WTC11 (cell line): ENCODE measurements at regions of chr2 and their contacts with region 1.

Region 1: GRCh38 chr2:25131567-25132298 is 36.6 kb downstream of the POMC start:
- DNase-seq: peak; percentile 47
- ATAC-seq: peak; percentile 56
- H3K4me3 Mint-ChIP-seq: peak overlapping the region; percentile 69
- H3K27ac Mint-ChIP-seq: no peak overlapping the region
- H3K4me1 Mint-ChIP-seq: peaks cover 13% of the 10 kb centered on the region
- H3K27me3 Mint-ChIP-seq: peaks cover 26% of the 10 kb centered on the region
- CTCF ChIP-seq: no peak

Region 2: GRCh38 chr2:24827321-24828237 is 304.2 kb before region 1 on chr2:
- CTCF ChIA-PET with region 1: interaction called, 10 read pairs
- POLR2A ChIA-PET with region 1: no interaction called
- DNase-seq: peak; percentile 89
- ATAC-seq: peak; percentile 89
- H3K4me3 Mint-ChIP-seq: no peak overlapping the region
- H3K27ac Mint-ChIP-seq: peak overlapping the region; percentile 90
- H3K4me1 Mint-ChIP-seq: peaks cover 33% of the 10 kb centered on the region
- H3K27me3 Mint-ChIP-seq: no peaks in the 10 kb centered on the region; the same call in 1 of the 2 replicates
- CTCF ChIP-seq: peak; percentile 77

Region 3: DNA sequence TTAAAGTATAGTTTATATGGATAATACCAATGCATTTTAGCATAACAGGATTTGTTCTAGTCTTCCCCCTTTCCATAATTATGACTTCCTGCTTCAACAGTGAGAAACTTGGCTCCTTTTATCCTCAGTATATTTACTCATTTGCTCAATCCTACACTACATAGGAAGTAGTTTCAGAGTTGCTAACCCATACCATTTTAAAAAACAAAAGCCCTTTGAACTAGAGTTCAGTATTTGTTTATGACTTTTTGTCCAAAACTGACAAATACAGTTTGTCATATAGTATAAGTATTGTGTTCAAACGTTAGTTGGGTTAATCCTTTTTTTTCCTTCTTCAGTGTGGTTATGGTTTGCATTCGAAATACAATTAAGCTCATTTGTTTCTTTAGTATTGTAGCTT is 154.1 kb before region 1 on chr2:
- CTCF ChIA-PET with region 1: interaction called, 140 read pairs
- POLR2A ChIA-PET with region 1: interaction called, 4 read pairs
- DNase-seq: no peak
- ATAC-seq: no peak
- H3K4me3 Mint-ChIP-seq: no peak overlapping the region
- H3K27ac Mint-ChIP-seq: no peak overlapping the region
- H3K4me1 Mint-ChIP-seq: peaks cover 2% of the 10 kb centered on the region; the same call in 1 of the 2 replicates
- H3K27me3 Mint-ChIP-seq: no peaks in the 10 kb centered on the region
- CTCF ChIP-seq: no peak

Region 4: DNA sequence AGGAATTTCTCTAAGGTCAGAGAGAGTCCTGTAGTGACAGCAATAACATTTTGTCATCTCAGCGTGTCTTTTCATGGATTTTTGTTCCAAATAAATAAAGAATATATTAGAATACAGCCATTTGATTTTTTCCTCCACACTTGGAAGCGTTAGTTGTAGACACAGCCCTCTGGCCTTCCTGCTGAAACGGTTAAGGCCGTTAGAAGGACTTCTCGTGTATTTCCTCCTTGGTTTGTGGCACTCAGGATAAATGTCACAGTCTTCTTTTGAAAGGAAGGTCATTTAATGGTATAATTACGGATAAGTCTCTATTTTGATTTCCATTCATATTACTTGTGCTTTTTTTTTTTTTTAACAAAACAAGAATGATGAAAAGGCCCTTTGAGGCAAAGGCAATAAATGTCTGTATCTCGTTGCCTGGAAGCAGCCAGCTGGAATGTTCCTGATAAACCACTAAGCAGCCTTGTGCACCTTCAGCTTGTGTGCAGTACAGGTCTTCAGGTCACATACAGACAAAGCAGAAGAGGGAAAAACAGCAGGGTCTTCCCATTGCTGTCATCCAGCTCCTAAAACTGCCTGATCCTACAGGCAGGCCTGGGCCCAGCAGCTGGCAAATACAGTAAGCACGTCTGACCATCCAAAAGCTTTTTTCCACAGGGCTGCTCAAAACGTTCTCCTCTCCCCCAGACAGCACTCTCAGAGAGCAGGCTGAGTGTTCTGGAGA is 75.5 kb before region 1 on chr2:
- CTCF ChIA-PET with region 1: interaction called, 12 read pairs
- POLR2A ChIA-PET with region 1: no interaction called
- DNase-seq: no peak
- ATAC-seq: no peak
- H3K4me3 Mint-ChIP-seq: no peak overlapping the region
- H3K27ac Mint-ChIP-seq: no peak overlapping the region
- H3K4me1 Mint-ChIP-seq: peaks cover 3% of the 10 kb centered on the region; the same call in 1 of the 2 replicates
- H3K27me3 Mint-ChIP-seq: no peaks in the 10 kb centered on the region
- CTCF ChIP-seq: no peak

Region 5: DNA sequence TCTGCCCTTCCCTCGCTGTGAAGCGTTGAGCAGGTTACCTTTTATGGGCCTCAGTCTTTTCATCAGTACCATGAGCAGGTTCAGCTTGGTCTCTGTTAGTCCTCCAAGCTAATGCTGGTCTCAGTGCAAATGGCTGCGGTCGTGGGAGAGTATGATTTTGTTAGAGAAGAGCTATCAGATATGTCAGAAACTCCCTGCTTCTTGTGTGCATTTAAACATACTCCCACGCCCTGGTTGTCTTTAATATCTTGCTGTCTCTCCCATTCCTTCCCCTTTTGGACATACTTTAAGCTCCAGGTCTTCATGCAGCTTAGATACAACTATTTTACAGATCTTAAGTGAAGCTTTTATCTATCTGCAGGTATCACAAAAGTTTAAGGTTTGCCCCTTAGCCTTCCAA is 27.0 kb before region 1 on chr2:
- CTCF ChIA-PET with region 1: interaction called, 10 read pairs
- POLR2A ChIA-PET with region 1: no interaction called
- DNase-seq: no peak
- ATAC-seq: no peak
- H3K4me3 Mint-ChIP-seq: no peak overlapping the region
- H3K27ac Mint-ChIP-seq: no peak overlapping the region
- H3K4me1 Mint-ChIP-seq: peaks cover 6% of the 10 kb centered on the region
- H3K27me3 Mint-ChIP-seq: no peaks in the 10 kb centered on the region
- CTCF ChIP-seq: no peak

Region 6: GRCh38 chr2:25165992-25166875 is 34.5 kb after region 1 on chr2:
- CTCF ChIA-PET with region 1: interaction called, 12 read pairs
- POLR2A ChIA-PET with region 1: no interaction called
- DNase-seq: peak; percentile 70
- ATAC-seq: peak; percentile 73
- H3K4me3 Mint-ChIP-seq: no peak overlapping the region
- H3K27ac Mint-ChIP-seq: no peak overlapping the region
- H3K4me1 Mint-ChIP-seq: peaks cover 9% of the 10 kb centered on the region
- H3K27me3 Mint-ChIP-seq: peaks cover 63% of the 10 kb centered on the region
- CTCF ChIP-seq: no peak